ENCODE measurements at regions of chr4 and their contacts with region 1.

Region 1: GRCh38 chr4:154982187-154983047 is 201.3 kb downstream of the RBM46 start:
- DNase-seq: peak; percentile 22 to 30
- ATAC-seq: peak in 2 of 8 donors; percentile 27 to 33
- H3K4me3 ChIP-seq: no peak overlapping the region
- H3K27ac ChIP-seq: no peak overlapping the region
- H3K4me1 ChIP-seq: no peaks in the 10 kb centered on the region
- H3K27me3 ChIP-seq: no peaks in the 10 kb centered on the region
- CTCF ChIP-seq: peak in 8 of 9 donors; percentile 21 to 64 (median 61)

Region 2: DNA sequence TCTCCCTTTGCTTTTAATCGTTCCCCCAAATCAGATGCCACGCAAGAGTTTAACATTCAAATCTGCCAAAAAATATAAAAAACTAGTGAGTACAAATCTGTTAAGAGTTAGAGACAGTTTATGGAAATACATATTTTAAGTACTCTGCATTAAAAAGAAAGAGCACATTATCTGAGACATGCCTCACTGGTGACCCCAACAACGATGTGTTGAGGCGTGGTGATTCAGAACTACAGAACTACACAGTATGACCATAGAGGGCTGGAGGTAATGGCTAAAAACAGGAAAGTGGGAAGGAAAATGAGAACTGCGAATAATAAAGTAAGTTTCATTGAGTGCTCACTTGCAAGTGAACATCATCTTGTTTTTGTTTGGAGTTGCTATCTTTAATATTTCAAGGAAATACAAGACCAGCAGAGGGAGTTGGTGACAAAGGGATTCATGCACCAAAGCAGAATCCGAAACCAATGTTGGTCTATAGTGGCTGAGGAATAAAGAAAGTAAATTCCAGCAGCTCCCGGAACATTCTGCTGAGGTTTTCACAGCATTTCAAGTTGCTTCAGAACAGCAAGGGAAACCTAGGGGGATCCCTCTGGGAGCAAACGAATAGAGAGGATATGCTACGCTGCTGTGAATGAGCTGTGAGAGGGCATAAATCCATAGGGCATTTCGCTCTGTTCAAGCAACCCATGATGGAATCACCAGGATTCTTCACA is 583.0 kb before region 1 on chr4:
- intact Hi-C with region 1: no loop called
- DNase-seq: no peak
- ATAC-seq: peak in 2 of 8 donors; percentile 33 to 34
- H3K4me3 ChIP-seq: peak overlapping the region in 3 of 10 donors; percentile 18 to 26 (median 24)
- H3K27ac ChIP-seq: no peak overlapping the region
- H3K4me1 ChIP-seq: no peaks in the 10 kb centered on the region
- H3K27me3 ChIP-seq: peaks cover 0 to 8% (median 0%) of the 10 kb centered on the region in 7 donors
- CTCF ChIP-seq: peak in 7 of 9 donors; percentile 18 to 53 (median 45)

Region 3: GRCh38 chr4:155114790-155115189 is 132.4 kb after region 1 on chr4:
- intact Hi-C with region 1: no loop called
- DNase-seq: no peak
- ATAC-seq: no peak
- H3K4me3 ChIP-seq: no peak overlapping the region
- H3K27ac ChIP-seq: no peak overlapping the region
- H3K4me1 ChIP-seq: no peaks in the 10 kb centered on the region
- H3K27me3 ChIP-seq: no peaks in the 10 kb centered on the region
- CTCF ChIP-seq: no peak

Region 4: GRCh38 chr4:155376387-155377268 is 394.2 kb after region 1 on chr4 and contains the start of gene MAP9:
- intact Hi-C with region 1: loop called in 1 of 10 experiments (anchors 10 kb)
- DNase-seq: peak; percentile 84 to 92
- ATAC-seq: peak; percentile 97 to 100 (median 98)
- H3K4me3 ChIP-seq: peak within 1 kb of the TSS; percentile 60 to 87 (median 70)
- H3K27ac ChIP-seq: peak within 1 kb of the TSS in 3 of 10 donors; percentile 27 to 64 (median 57)
- H3K4me1 ChIP-seq: peaks cover 0 to 18% (median 10%) of the 10 kb centered on the region in 9 donors
- H3K27me3 ChIP-seq: peaks cover 0 to 44% (median 14%) of the 10 kb centered on the region in 7 donors
- CTCF ChIP-seq: no peak
- total RNA-seq, gene MAP9: 6.7 to 10.7 (median 9.7) TPM

Measured in heart right ventricle (tissue), 16 donors.